Caco-2 (cell line): ENCODE measurements at regions of chr2 and their contacts with region 1.

Region 1: GRCh38 chr2:99141110-99142108 is at the start of gene C2orf15:
- DNase-seq: peak; percentile 98 to 99
- H3K4me3 ChIP-seq: peak within 1 kb of the TSS; percentile 75
- H3K4me3 Mint-ChIP-seq: peak within 1 kb of the TSS; percentile 98
- H3K27ac Mint-ChIP-seq: peak within 1 kb of the TSS; percentile 94
- H3K4me1 ChIP-seq: peaks cover 12% of the 10 kb centered on the region
- H3K4me1 Mint-ChIP-seq: peaks cover 20% of the 10 kb centered on the region
- H3K27me3 ChIP-seq: no peaks in the 10 kb centered on the region
- H3K27me3 Mint-ChIP-seq: no peaks in the 10 kb centered on the region
- CTCF ChIP-seq: no peak
- total RNA-seq, gene C2orf15: 11.3 and 12.5 TPM in 2 replicates

Region 2: GRCh38 chr2:99101697-99102096 is 39.7 kb before region 1 on chr2:
- CTCF ChIA-PET with region 1: no interaction called
- POLR2A ChIA-PET with region 1: interaction called, 7 read pairs
- intact Hi-C with region 1: loop called (anchors 2 kb)
- DNase-seq: peak in 1 of 2 experiments; percentile 8
- H3K4me3 ChIP-seq: no peak overlapping the region
- H3K4me3 Mint-ChIP-seq: no peak overlapping the region
- H3K27ac Mint-ChIP-seq: no peak overlapping the region
- H3K4me1 ChIP-seq: no peaks in the 10 kb centered on the region
- H3K4me1 Mint-ChIP-seq: peaks cover 7% of the 10 kb centered on the region
- H3K27me3 ChIP-seq: no peaks in the 10 kb centered on the region
- H3K27me3 Mint-ChIP-seq: no peaks in the 10 kb centered on the region
- CTCF ChIP-seq: peak in 1 of 2 experiments; percentile 23

Region 3: GRCh38 chr2:99154643-99155536 is 13.5 kb after region 1 on chr2 and contains the starts of genes LIPT1 and TSGA10:
- CTCF ChIA-PET with region 1: interaction called, 13 read pairs
- POLR2A ChIA-PET with region 1: interaction called, 52 read pairs
- intact Hi-C with region 1: loop called (anchors 1 kb)
- DNase-seq: peak; percentile 92 to 93
- H3K4me3 ChIP-seq: peak within 1 kb of the TSS; percentile 86
- H3K4me3 Mint-ChIP-seq: no peak within 1 kb of the TSS
- H3K27ac Mint-ChIP-seq: peak within 1 kb of the TSS; percentile 87
- H3K4me1 ChIP-seq: no peaks in the 10 kb centered on the region; the same call in 1 of the 2 replicates
- H3K4me1 Mint-ChIP-seq: peaks cover 7% of the 10 kb centered on the region
- H3K27me3 ChIP-seq: no peaks in the 10 kb centered on the region
- H3K27me3 Mint-ChIP-seq: no peaks in the 10 kb centered on the region
- CTCF ChIP-seq: peak in 1 of 2 experiments; percentile 34
- total RNA-seq, gene LIPT1: 9.4 and 10.2 TPM in 2 replicates
- total RNA-seq, gene TSGA10: 8.9 and 9.9 TPM in 2 replicates

Region 4: DNA sequence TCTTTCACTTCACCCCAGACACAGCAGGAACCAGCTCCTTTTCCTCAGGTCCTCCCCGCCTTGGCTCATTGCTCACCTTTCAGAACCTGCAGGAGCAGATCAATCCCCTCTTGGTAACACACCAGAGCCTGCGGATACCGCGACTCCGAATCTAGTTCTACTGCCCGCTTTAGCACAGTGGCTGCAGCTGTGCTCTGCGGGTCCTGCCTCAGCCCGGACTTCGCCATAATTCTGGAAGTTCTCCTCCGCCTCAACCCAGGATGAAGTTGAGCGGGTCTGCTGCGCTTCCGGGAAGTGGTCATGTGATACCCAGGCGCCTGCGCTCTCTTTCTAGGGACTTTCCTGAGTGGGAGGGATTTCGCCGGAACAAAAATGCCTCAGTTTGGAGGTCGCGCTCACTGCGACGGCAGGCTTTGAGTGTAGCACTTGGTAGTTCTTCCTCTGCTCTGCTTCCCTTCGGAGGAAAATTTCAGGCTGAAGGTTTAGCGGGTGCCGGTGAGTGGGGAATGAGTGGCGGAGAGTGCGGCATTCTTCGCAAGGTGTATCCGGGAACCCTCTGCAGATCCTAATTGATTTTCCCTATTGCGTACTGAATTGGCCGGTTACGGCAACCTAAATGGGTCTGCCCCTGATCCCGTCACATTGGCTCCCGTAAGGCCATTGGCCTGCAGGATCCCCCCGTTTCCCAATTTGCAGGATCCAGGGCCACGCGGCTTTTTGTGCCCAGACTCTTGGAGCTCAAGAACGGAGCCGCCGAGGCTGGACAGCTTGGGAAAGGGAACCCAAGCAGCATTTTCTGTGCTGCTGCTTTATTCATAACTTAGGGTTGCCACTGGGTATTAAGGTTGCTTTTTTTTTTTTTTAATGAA is 39.6 kb after region 1 on chr2 and contains the starts of genes MITD1 and MRPL30:
- CTCF ChIA-PET with region 1: interaction called, 4 read pairs
- POLR2A ChIA-PET with region 1: interaction called, 28 read pairs
- intact Hi-C with region 1: loop called (anchors 1 kb)
- DNase-seq: peak; percentile 94
- H3K4me3 ChIP-seq: peak within 1 kb of the TSS; percentile 87
- H3K4me3 Mint-ChIP-seq: peak within 1 kb of the TSS; percentile 92
- H3K27ac Mint-ChIP-seq: peak within 1 kb of the TSS; percentile 84
- H3K4me1 ChIP-seq: peaks cover 28% of the 10 kb centered on the region
- H3K4me1 Mint-ChIP-seq: peaks cover 9% of the 10 kb centered on the region
- H3K27me3 ChIP-seq: no peaks in the 10 kb centered on the region
- H3K27me3 Mint-ChIP-seq: no peaks in the 10 kb centered on the region
- CTCF ChIP-seq: no peak
- total RNA-seq, gene MITD1: 29.3 and 30.5 TPM in 2 replicates
- total RNA-seq, gene MRPL30: 49.9 and 51.2 TPM in 2 replicates

Region 5: DNA sequence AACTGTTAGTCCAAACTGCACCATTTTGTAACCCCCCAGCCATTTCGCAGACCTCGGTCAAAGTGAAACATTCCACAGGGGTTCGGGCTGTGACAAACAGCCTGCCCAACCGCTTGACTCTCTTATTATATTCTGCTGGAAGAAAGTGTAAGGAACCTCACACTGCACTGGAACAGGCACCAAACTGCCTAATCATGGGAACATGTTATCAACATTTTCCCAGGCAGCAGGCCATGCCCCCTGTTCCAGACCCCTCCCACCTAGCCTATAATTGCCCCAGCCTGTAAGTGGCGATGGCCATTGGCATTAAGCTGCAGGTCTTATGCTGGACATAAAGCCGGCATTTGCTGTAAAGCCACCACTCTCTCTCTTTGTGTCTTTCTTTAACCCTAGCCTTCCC is 97.2 kb after region 1 on chr2:
- CTCF ChIA-PET with region 1: no interaction called
- POLR2A ChIA-PET with region 1: no interaction called
- intact Hi-C with region 1: no loop called
- DNase-seq: no peak
- H3K4me3 ChIP-seq: no peak overlapping the region
- H3K4me3 Mint-ChIP-seq: no peak overlapping the region
- H3K27ac Mint-ChIP-seq: no peak overlapping the region
- H3K4me1 ChIP-seq: no peaks in the 10 kb centered on the region
- H3K4me1 Mint-ChIP-seq: no peaks in the 10 kb centered on the region
- H3K27me3 ChIP-seq: no peaks in the 10 kb centered on the region
- H3K27me3 Mint-ChIP-seq: peaks cover 3% of the 10 kb centered on the region
- CTCF ChIP-seq: no peak

Region 6: DNA sequence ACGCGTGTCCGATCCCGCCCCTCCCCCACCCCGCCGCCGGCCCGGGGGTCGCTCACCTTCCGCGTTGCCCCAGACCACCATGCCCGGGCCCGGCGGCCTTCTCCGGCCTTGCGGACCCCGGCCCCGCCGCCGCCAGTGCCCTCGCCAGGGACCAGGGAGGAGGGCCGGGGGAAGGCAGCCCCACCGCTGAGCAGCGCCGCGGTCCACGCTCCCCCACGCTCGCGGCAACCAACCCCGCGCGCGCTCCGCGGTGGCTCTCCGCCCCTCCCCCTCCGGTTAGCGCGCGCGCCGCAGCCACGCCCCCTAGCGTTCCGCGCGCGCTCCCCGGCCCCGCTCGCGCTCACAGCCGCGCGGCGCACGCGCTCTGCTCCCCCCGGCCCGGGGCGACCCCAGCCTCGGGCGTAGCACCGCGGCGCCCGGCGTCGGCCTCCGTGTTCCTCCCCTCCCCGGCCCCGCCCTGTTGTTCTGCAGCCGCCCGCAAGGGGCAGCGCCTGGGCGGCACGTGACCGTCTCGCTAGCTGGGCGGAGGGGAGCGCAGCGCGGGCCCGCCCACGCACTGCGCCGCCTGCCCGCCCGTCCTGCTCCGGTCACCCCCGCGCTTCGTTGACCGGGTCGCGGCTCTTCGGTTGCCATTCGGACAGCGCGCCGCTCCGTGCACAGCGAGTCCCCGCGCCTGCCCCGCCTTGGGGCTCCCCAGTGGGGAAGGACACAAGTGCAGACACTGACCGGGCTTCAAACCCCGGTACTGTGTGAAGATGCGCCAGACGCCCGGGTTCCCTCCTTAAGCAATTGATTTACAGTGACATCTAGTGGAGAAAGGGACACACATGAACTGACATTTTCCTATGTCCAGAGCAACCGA is 348.6 kb after region 1 on chr2 and contains the start of gene REV1:
- CTCF ChIA-PET with region 1: no interaction called
- POLR2A ChIA-PET with region 1: no interaction called
- intact Hi-C with region 1: loop called (anchors 5 kb)
- DNase-seq: peak; percentile 94 to 97
- H3K4me3 ChIP-seq: peak within 1 kb of the TSS; percentile 87
- H3K4me3 Mint-ChIP-seq: peak within 1 kb of the TSS; percentile 100
- H3K27ac Mint-ChIP-seq: peak within 1 kb of the TSS; percentile 99
- H3K4me1 ChIP-seq: peaks cover 5% of the 10 kb centered on the region; the same call in 1 of the 2 replicates
- H3K4me1 Mint-ChIP-seq: peaks cover 7% of the 10 kb centered on the region
- H3K27me3 ChIP-seq: no peaks in the 10 kb centered on the region
- H3K27me3 Mint-ChIP-seq: no peaks in the 10 kb centered on the region
- CTCF ChIP-seq: peak; percentile 65 to 83
- total RNA-seq, gene REV1: 39.6 and 41.1 TPM in 2 replicates